ENCODE measurements at regions of chr9 and their contacts with region 1.

Region 1: GRCh38 chr9:74036549-74037231 is 460.4 kb upstream of the RORB start:
- DNase-seq: no peak
- ATAC-seq: no peak
- H3K4me3 ChIP-seq: no peak overlapping the region
- H3K27ac ChIP-seq: no peak overlapping the region
- H3K4me1 ChIP-seq: peaks cover 25% of the 10 kb centered on the region
- H3K27me3 ChIP-seq: no peaks in the 10 kb centered on the region
- CTCF ChIP-seq: no peak
- EP300 ChIP-seq: no peak
- POLR2A ChIP-seq: no peak
- RAD21 ChIP-seq: no peak

Region 2: DNA sequence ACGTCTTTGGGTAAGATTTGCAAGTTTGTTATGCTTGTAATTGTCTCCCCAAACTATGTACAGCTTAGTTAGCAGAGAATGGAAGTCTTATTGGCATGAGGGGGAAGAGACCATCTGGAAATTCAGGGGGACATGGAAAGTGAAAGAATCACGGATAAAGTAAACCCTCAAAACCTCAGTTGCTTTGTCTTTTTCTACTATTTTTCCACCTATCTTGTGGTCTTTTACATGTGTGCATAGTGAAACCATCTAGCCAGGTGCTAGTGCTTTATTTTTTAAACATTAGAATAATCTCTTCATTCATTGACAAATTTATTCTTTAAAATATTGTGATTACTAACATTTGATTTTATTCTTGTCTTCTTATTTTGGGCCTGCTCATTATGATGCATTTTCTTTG is 19.3 kb after region 1 on chr9:
- CTCF ChIA-PET with region 1: no interaction called
- POLR2A ChIA-PET with region 1: no interaction called
- in situ Hi-C with region 1: no loop called
- intact Hi-C with region 1: loop called (anchors 1 kb)
- DNase-seq: no peak
- ATAC-seq: no peak
- H3K4me3 ChIP-seq: no peak overlapping the region
- H3K27ac ChIP-seq: no peak overlapping the region
- H3K4me1 ChIP-seq: no peaks in the 10 kb centered on the region
- H3K27me3 ChIP-seq: no peaks in the 10 kb centered on the region
- CTCF ChIP-seq: no peak
- EP300 ChIP-seq: no peak
- POLR2A ChIP-seq: no peak
- RAD21 ChIP-seq: no peak

Measured in HepG2 (cell line).